Breast epithelium (tissue), 4 donors: ENCODE measurements at regions of chr11 and their contacts with region 1.

Region 1: GRCh38 chr11:33857933-33858371 is 33.9 kb downstream of the LMO2 start:
- DNase-seq: peak; percentile 54 to 70
- H3K4me3 ChIP-seq: no peak overlapping the region
- H3K27ac ChIP-seq: no peak overlapping the region
- H3K4me1 ChIP-seq: no peaks in the 10 kb centered on the region
- H3K27me3 ChIP-seq: no peaks in the 10 kb centered on the region
- CTCF ChIP-seq: peak; percentile 80 to 84 (median 82)
- POLR2A ChIP-seq: no peak

Region 2: DNA sequence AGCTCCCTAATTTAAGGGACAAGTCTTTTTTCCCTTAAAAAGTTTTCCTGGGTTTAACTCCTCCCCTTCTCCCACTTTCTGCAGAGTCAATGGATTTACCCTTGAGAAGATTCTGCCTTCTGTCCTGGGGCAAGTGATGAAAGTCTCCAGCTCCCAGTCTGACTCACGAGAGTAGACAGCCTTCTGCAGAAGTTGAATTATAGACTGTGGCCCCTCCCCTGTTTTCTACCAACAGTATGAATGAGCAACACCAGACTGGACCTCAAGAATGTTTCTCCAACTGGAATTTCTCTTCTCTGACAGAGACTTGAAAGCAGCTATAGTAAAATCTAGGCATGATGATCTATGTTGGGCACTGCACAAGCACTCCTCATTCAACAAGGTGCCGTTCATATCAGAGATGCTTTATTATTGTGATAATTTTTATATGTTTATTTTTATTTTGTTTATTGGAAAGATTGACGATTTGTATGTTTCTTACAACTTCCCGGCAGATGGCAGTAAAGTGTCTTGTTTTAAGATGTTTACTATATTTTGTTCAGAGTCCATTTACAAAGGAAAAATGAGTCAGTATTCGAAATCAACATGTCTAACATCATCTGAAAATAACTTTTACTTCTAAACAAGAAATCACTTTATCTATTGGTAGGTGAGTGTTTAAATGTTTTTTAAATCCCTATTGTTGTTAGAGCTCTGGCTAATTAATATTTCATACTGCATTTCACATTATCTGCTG is 22.6 kb before region 1 on chr11:
- intact Hi-C with region 1: no loop called
- DNase-seq: no peak
- H3K4me3 ChIP-seq: no peak overlapping the region
- H3K27ac ChIP-seq: no peak overlapping the region
- H3K4me1 ChIP-seq: no peaks in the 10 kb centered on the region
- H3K27me3 ChIP-seq: no peaks in the 10 kb centered on the region
- CTCF ChIP-seq: peak in 2 of 3 donors; percentile 16 to 21
- POLR2A ChIP-seq: no peak

Region 3: GRCh38 chr11:33970984-33971466 is 113.1 kb after region 1 on chr11:
- intact Hi-C with region 1: loop called (anchors 5 kb)
- DNase-seq: peak in 1 of 2 donors; percentile 34
- H3K4me3 ChIP-seq: no peak overlapping the region
- H3K27ac ChIP-seq: no peak overlapping the region
- H3K4me1 ChIP-seq: no peaks in the 10 kb centered on the region
- H3K27me3 ChIP-seq: no peaks in the 10 kb centered on the region
- CTCF ChIP-seq: peak in 2 of 3 donors; percentile 52 to 66
- POLR2A ChIP-seq: no peak